Natural killer cell (primary cell): ENCODE measurements at regions of chr15 and their contacts with region 1.

Region 1: GRCh38 chr15:26051761-26052675 is 188.9 kb upstream of the ATP10A start:
- DNase-seq: no peak
- ATAC-seq: no peak
- H3K4me3 ChIP-seq: no peak overlapping the region
- H3K4me3 Mint-ChIP-seq: no peak overlapping the region
- H3K27ac ChIP-seq: no peak overlapping the region
- H3K27ac Mint-ChIP-seq: no peak overlapping the region
- H3K4me1 ChIP-seq: no peaks in the 10 kb centered on the region
- H3K4me1 Mint-ChIP-seq: no peaks in the 10 kb centered on the region
- H3K27me3 ChIP-seq: no peaks in the 10 kb centered on the region
- H3K27me3 Mint-ChIP-seq: peaks cover 11 to 20% of the 10 kb centered on the region in 2 donors
- CTCF ChIP-seq: no peak

Region 2: GRCh38 chr15:26115229-26115943 is 63.4 kb after region 1 on chr15:
- intact Hi-C with region 1: loop called (anchors 10 kb)
- DNase-seq: no peak
- ATAC-seq: no peak
- H3K4me3 ChIP-seq: no peak overlapping the region
- H3K4me3 Mint-ChIP-seq: no peak overlapping the region
- H3K27ac ChIP-seq: no peak overlapping the region
- H3K27ac Mint-ChIP-seq: no peak overlapping the region
- H3K4me1 ChIP-seq: no peaks in the 10 kb centered on the region
- H3K4me1 Mint-ChIP-seq: no peaks in the 10 kb centered on the region
- H3K27me3 ChIP-seq: no peaks in the 10 kb centered on the region
- H3K27me3 Mint-ChIP-seq: peaks cover 0 to 7% of the 10 kb centered on the region in 2 donors
- CTCF ChIP-seq: no peak